ENCODE measurements at regions of chr7 and their contacts with region 1.

Region 1: DNA sequence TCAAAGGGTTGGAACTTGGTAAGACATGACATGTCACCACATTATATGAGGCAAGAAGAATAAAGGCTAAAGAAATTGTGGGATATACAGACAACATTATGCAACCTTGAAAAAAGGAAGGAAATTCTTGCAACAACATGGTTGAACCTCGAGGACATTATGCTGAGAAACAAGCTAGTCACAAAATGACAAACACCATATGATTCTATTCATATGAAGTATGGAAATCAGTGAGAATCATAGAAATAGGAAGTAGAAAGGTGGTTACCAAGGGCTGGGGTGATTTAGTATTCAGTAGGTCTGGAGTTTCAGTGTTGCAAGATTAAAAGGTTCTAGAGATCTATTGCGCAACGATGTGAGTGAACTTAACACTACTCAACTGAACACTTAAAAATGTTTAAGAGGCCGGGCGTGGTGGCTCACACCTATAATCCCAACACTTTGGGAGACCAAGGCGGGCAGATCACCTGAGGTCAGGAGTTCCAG is 126.9 kb upstream of the TBX20 start:
- DNase-seq: no peak
- ATAC-seq: no peak
- H3K4me3 ChIP-seq: no peak overlapping the region
- H3K27ac ChIP-seq: no peak overlapping the region
- H3K4me1 ChIP-seq: no peaks in the 10 kb centered on the region
- H3K27me3 ChIP-seq: no peaks in the 10 kb centered on the region

Region 2: DNA sequence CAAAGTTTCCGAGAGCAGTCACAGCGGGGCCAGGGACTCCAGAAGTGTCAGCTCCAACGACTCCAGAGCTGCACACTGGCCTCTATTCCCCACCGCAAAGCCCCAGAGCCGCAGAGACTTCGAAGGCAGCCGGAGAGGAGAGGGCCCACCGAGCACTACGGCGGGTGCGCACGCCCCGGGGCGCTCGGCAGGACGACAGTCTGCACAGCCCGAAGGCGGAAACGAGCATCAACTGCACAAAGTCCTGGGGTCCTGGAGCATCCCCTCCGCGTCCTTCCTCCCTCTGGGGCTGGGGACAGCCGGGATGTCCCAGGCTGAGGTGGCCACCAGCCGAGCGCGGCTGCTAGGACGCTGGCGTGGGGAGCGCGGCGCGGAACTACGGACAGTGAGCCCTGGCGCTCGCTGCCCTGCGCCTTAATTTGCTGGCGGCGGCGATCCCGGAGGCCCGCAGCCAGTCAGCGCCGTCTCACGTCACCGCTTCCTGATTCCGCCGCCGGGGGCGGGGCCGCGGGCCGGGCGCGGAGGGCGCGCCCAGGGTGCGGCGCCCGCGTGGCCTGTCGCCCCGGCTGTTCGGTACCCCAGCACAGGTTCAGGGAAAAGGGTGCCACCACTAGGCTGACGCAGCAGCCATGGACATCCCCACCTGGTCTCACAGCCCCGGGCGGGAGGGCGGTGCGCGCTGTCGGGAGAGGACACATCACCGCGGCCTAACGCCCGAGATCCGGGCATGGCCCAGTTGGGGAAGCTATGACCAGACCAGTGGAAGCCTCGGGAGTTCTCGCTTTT is 126.9 kb before region 1 on chr7 and contains the start of gene TBX20:
- intact Hi-C with region 1: loop called in 1 of 4 experiments (anchors 10 kb)
- DNase-seq: peak; percentile 88 to 96 (median 94)
- ATAC-seq: peak; percentile 85
- H3K4me3 ChIP-seq: peak within 1 kb of the TSS; percentile 89
- H3K27ac ChIP-seq: peak within 1 kb of the TSS; percentile 82
- H3K4me1 ChIP-seq: no peaks in the 10 kb centered on the region
- H3K27me3 ChIP-seq: no peaks in the 10 kb centered on the region
- total RNA-seq, gene TBX20: 180 to 254 (median 236) TPM

Region 3: GRCh38 chr7:35261476-35262285 is 119.1 kb before region 1 on chr7:
- intact Hi-C with region 1: loop called in 3 of 4 experiments (anchors 5 to 10 kb)
- DNase-seq: peak; percentile 42 to 85 (median 82)
- ATAC-seq: peak; percentile 46 to 55
- H3K4me3 ChIP-seq: no peak overlapping the region
- H3K27ac ChIP-seq: peak overlapping the region; percentile 57
- H3K4me1 ChIP-seq: peaks cover 5% of the 10 kb centered on the region
- H3K27me3 ChIP-seq: no peaks in the 10 kb centered on the region

Region 4: GRCh38 chr7:35286422-35286821 is 94.4 kb before region 1 on chr7:
- intact Hi-C with region 1: loop called in 1 of 4 experiments (anchors 10 kb)
- DNase-seq: no peak
- ATAC-seq: no peak
- H3K4me3 ChIP-seq: no peak overlapping the region
- H3K27ac ChIP-seq: no peak overlapping the region
- H3K4me1 ChIP-seq: no peaks in the 10 kb centered on the region
- H3K27me3 ChIP-seq: no peaks in the 10 kb centered on the region

Region 5: DNA sequence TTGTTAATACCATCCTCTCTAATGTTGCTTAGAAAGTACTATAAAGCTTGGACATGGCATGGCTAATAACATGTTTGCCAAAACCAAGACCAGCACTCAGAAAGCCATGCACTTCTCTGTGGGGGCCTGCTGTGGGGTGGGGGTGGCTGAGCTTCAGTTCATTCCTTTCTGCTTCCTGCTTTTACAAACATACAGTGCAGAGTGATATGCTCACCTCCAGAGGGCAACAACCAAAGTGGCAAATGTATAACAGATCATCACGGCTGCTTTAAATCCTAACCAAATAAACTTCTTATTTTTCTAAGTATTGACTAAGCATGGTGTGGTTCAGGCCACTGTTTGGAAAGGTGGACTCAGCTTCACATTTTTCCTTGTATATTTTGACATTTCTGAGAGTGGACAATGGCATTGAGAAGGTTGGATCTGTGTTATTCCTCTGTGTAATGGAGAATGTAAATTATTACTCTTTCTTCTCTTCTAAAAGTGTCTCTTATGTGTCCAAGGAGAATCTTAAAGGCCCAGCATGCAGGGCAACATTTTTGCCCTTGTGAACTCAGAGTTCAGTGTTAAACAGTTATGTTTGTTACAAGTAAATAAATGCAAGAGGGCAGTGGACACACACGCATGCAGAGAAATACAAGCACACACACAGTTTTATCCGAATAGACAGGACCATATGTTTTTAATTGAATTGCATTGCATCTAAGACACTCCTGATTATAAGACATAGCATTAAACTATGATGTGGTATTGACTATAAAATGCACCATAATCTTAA is 128.0 kb after region 1 on chr7:
- intact Hi-C with region 1: no loop called
- DNase-seq: no peak
- ATAC-seq: no peak
- H3K4me3 ChIP-seq: no peak overlapping the region
- H3K27ac ChIP-seq: no peak overlapping the region
- H3K4me1 ChIP-seq: peaks cover 2% of the 10 kb centered on the region
- H3K27me3 ChIP-seq: no peaks in the 10 kb centered on the region

Region 6: DNA sequence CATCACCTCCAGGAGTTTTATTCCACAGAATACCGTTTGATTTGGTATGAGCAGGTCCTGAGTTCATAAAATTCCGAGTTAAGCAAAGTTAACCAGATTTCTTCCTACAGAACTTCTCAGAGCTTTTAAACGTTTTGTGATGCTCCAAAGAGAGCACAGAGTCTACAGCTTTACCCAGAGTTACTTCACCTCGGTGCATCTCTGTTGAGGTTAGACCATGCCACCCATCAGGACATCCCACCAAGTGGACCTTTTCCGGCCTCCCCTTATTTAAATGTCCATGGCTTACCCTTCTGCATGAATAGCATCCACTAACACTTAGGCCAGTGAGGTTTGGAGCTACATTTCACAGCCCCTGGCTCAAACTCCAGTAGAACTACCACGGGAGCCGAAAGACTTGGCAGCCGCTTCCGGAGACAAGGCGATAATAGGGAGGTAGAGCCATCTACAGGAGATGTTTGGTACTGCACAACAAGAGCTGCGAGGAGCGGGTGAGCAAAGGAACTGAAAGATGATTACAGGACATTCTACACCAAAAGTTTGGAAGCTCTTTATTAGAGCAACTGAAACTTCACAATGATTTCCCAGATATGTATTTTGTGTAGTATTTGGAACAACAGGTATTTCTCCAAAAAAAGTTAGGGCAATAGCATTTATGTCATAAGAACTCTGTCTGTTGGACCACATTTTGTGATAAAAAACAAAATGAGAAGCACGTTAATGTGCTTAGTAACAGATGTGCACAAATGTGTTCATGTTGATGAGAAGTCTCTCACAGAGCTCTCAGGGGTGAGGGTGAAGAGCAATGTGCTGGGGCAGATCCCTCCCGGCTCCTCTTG is 139.4 kb after region 1 on chr7:
- intact Hi-C with region 1: no loop called
- DNase-seq: peak; percentile 88 to 96 (median 90)
- ATAC-seq: peak; percentile 92
- H3K4me3 ChIP-seq: no peak overlapping the region
- H3K27ac ChIP-seq: peak overlapping the region; percentile 24
- H3K4me1 ChIP-seq: peaks cover 2% of the 10 kb centered on the region
- H3K27me3 ChIP-seq: no peaks in the 10 kb centered on the region

Measured in right cardiac atrium (tissue), 5 donors.